ENCODE measurements at regions of chr5 and their contacts with region 1.

Region 1: GRCh38 chr5:56490951-56491468 is 257.9 kb upstream of the ANKRD55 start:
- DNase-seq: peak; percentile 87 to 97
- H3K4me3 ChIP-seq: peak overlapping the region; percentile 41; the same call in 1 of the 2 replicates
- H3K27ac ChIP-seq: peak overlapping the region; percentile 83
- H3K4me1 ChIP-seq: peaks cover 32% of the 10 kb centered on the region
- H3K27me3 ChIP-seq: no peaks in the 10 kb centered on the region
- CTCF ChIP-seq: no peak

Region 2: GRCh38 chr5:56447232-56447631 is 43.8 kb before region 1 on chr5:
- CTCF ChIA-PET with region 1: no interaction called
- POLR2A ChIA-PET with region 1: interaction called, 3 read pairs
- intact Hi-C with region 1: loop called (anchors 1 kb)
- DNase-seq: peak; percentile 75 to 96
- H3K4me3 ChIP-seq: no peak overlapping the region
- H3K27ac ChIP-seq: peak overlapping the region; percentile 79
- H3K4me1 ChIP-seq: peaks cover 32% of the 10 kb centered on the region
- H3K27me3 ChIP-seq: no peaks in the 10 kb centered on the region
- CTCF ChIP-seq: no peak

Region 3: GRCh38 chr5:56534032-56534829 is 43.2 kb after region 1 on chr5:
- CTCF ChIA-PET with region 1: interaction called, 3 read pairs
- POLR2A ChIA-PET with region 1: no interaction called
- intact Hi-C with region 1: loop called (anchors 1 kb)
- DNase-seq: peak; percentile 72 to 89
- H3K4me3 ChIP-seq: no peak overlapping the region
- H3K27ac ChIP-seq: peak overlapping the region; percentile 66
- H3K4me1 ChIP-seq: peaks cover 29% of the 10 kb centered on the region
- H3K27me3 ChIP-seq: no peaks in the 10 kb centered on the region
- CTCF ChIP-seq: no peak

Measured in PC-9 (cell line).